ENCODE measurements at regions of chr12 and their contacts with region 1.

Region 1: GRCh38 chr12:54032627-54033100 is at the start of gene HOXC5:
- H3K4me3 ChIP-seq: peak within 1 kb of the TSS; percentile 29
- H3K27ac ChIP-seq: peak within 1 kb of the TSS; percentile 100
- H3K4me1 ChIP-seq: peaks cover 45% of the 10 kb centered on the region
- CTCF ChIP-seq: peak; percentile 99

Region 2: GRCh38 chr12:53978477-53979356 is 53.9 kb before region 1 on chr12:
- CTCF ChIA-PET with region 1: no interaction called
- POLR2A ChIA-PET with region 1: no interaction called
- H3K4me3 ChIP-seq: no peak overlapping the region
- H3K27ac ChIP-seq: peak overlapping the region; percentile 91
- H3K4me1 ChIP-seq: peaks cover 34% of the 10 kb centered on the region
- CTCF ChIP-seq: no peak

Region 3: DNA sequence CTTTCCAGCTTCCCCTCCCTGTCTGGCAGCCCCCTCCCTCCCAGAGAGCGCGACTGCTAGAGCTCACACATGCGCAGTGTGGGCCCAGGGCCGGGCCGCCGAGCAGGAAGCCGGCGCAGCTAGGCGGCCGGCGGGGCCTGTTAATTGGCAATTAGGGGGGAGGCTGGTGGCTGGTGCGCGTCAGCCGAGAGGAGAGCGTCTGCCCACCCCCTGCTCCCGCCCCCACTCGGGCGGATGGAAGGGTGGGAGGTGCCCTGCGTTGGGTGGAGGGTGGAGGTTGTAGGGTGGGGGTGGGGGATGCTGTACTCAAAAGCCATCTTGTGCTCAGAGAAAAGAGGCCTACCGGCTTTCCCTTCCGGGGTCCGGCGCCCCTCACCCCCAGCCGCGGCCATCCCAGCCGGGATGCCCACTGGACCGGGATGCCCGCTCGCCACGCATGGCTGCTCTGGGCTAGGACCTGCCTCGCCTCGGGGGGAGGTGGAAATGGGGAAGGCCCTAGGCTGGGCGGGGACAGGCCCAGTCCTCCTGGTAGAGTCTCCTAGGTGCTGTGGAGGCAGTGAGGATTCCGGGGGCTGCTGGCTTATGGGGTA is 14.7 kb before region 1 on chr12:
- CTCF ChIA-PET with region 1: interaction called, 23 read pairs
- POLR2A ChIA-PET with region 1: interaction called, 26 read pairs
- H3K4me3 ChIP-seq: peak overlapping the region; percentile 81
- H3K27ac ChIP-seq: peak overlapping the region; percentile 100
- H3K4me1 ChIP-seq: peaks cover 49% of the 10 kb centered on the region
- CTCF ChIP-seq: no peak

Region 4: DNA sequence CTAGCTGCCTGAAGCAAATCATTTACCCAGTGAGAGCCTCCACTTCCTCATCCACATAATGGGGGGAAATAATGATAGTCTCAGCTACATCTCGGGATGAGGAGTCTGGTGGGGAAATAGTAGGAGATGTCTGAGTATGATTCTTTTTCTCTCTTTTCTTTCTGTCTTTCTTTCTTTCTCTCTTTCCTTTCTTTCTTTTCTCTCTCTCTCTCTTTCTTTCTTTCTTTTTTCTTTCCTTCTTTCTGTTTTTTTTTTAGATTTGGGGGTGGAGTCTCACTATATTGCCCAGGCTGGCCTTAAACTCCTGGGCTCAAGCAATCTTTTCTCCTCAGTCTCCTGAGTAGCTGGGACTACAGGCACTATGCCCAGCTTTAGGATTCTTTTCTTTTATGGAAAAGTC is 33.7 kb after region 1 on chr12:
- CTCF ChIA-PET with region 1: interaction called, 17 read pairs
- POLR2A ChIA-PET with region 1: no interaction called
- H3K4me3 ChIP-seq: no peak overlapping the region
- H3K27ac ChIP-seq: no peak overlapping the region
- H3K4me1 ChIP-seq: no peaks in the 10 kb centered on the region; the same call in 1 of the 2 replicates
- CTCF ChIP-seq: no peak

Region 5: DNA sequence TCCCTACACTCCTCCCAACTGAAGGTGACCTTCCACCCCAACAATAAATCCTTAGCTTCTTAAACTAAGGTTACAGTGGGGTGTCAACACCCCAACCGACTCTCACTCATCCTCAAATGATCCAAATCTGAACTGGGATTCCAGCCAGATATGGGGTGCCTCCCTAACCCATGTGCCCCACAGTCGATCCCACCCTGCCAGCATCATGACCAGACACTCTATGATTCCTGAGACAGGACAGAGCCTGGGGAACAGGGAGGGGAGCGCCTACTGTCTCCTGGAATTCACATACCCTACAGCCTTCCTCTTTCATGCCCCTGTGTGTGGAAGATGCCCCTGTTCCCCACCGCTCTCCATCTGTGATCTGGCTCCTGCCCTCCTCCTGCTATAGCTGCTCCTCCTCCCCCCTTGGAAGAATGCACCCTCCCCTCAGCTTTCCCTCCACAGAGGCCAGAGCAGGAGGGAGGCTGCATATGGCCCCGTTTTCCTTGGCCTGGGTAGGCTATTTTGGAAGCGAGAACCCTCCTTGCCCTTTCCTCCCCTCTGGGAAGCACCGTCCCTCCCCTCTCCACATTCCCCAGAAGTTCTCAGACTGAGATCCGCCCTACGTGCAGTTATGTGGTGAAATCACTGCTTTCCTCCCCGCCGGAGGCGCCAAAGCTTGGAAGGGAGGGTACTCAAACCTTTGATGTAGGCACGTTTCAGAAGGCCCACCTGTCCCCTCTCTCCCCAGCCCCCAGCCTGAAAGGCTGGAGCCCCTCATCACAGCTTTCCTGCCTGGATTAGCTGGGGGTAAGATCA is 108.1 kb after region 1 on chr12:
- CTCF ChIA-PET with region 1: interaction called, 71 read pairs
- POLR2A ChIA-PET with region 1: interaction called, 7 read pairs
- H3K4me3 ChIP-seq: no peak overlapping the region
- H3K27ac ChIP-seq: no peak overlapping the region
- H3K4me1 ChIP-seq: peaks cover 2% of the 10 kb centered on the region
- CTCF ChIP-seq: no peak

Region 6: DNA sequence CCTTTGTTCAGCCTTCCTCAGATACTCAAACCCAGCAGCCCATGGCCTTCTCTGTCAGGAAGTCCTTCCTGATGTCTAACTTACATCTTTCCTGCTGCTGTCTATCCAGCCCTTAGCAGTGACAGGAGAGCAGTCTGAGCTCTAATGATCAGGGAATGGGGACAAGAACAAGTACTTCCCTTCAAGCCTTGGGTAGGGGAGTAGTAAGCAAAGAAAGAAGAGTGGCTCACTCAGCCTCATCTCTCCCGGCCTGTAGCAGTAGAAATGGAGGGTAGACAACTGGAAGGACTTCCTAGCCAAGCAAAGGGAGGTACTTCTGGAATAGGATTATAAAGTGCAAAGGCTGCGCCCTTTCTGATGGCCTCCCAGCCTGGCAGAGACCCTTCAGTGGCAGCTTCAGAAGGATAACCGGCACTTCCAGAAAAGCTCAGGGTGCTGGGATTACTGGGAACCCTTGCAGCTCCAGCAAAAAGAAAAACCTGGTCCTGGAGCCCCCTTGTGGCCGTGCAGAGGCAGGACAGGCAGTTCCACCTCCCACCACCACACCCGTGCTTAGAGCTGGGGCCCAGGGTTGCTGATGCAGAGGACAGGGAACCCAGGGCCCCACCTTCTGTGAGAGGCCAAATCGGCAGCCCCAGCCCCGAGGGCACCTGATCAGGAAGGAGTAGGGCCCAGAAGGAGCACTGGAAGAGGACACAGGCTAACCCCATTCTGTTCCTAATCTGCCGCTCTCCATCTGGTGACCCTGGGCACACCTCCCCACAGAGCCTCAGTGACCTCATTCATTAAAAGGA is 168.5 kb after region 1 on chr12:
- CTCF ChIA-PET with region 1: interaction called, 109 read pairs
- POLR2A ChIA-PET with region 1: interaction called, 7 read pairs
- H3K4me3 ChIP-seq: no peak overlapping the region
- H3K27ac ChIP-seq: no peak overlapping the region
- H3K4me1 ChIP-seq: peaks cover 10% of the 10 kb centered on the region
- CTCF ChIP-seq: peak; percentile 94